Naive thymus-derived CD4-positive, alpha-beta T cell (primary cell): ENCODE measurements at regions of chr13 and their contacts with region 1.

Region 1: DNA sequence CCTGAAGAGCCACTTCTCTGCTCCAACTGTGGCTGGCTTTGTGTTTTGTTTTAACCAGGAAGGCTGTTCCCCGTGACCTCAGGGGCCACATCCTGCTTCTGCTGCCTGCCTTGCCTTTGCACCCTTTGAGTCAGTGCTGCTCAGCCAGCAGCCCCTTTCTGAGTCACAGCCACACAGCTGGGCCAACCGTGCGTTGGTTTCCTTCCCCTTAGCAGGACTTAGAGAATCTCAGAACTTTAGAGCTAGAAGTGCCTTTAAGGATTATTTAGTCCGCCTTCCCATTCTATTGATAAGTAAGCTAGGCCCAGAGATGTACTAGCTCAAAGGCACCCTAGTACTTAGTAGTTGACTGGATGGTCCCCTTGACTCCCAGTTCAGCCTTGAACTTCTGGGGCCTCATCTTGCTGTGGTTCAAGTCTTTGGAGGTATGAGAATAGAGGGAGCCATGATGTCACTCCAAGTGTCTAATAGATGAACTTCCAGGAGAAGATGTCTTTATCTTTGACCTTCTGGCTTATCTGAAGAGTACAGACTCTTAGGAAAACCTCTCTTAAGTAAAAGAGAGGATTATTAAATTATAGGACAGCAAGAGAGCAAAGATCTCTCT is 8.0 kb downstream of the RGCC start:
- DNase-seq: peak; percentile 63 to 90 (median 89)
- ATAC-seq: peak; percentile 72
- H3K4me3 ChIP-seq: peak overlapping the region; percentile 51
- H3K4me3 Mint-ChIP-seq: peak overlapping the region; percentile 89 to 98 (median 94)
- H3K27ac ChIP-seq: peak overlapping the region; percentile 97
- H3K27ac Mint-ChIP-seq: peak overlapping the region; percentile 96 to 100 (median 99)
- H3K4me1 ChIP-seq: peaks cover 64 to 87% of the 10 kb centered on the region in 2 donors
- H3K4me1 Mint-ChIP-seq: peaks cover 64 to 98% (median 93%) of the 10 kb centered on the region in 7 donors
- H3K27me3 ChIP-seq: no peaks in the 10 kb centered on the region
- H3K27me3 Mint-ChIP-seq: no peaks in the 10 kb centered on the region

Region 2: GRCh38 chr13:40181203-40181845 is 1284.0 kb before region 1 on chr13:
- CTCF ChIA-PET with region 1: no interaction called
- POLR2A ChIA-PET with region 1: no interaction called
- intact Hi-C with region 1: loop called in 1 of 2 experiments (anchors 10 kb)
- DNase-seq: no peak
- ATAC-seq: no peak
- H3K4me3 ChIP-seq: no peak overlapping the region
- H3K4me3 Mint-ChIP-seq: no peak overlapping the region
- H3K27ac ChIP-seq: no peak overlapping the region
- H3K27ac Mint-ChIP-seq: peak overlapping the region in 1 of 9 donors; percentile 37
- H3K4me1 ChIP-seq: peaks cover 8 to 42% of the 10 kb centered on the region in 2 donors
- H3K4me1 Mint-ChIP-seq: peaks cover 33 to 83% (median 67%) of the 10 kb centered on the region in 7 donors
- H3K27me3 ChIP-seq: no peaks in the 10 kb centered on the region
- H3K27me3 Mint-ChIP-seq: no peaks in the 10 kb centered on the region

Region 3: GRCh38 chr13:41543664-41544300 is 78.4 kb after region 1 on chr13:
- CTCF ChIA-PET with region 1: no interaction called
- POLR2A ChIA-PET with region 1: interaction called, 10 read pairs
- intact Hi-C with region 1: loop called (anchors 1 to 5 kb)
- DNase-seq: no peak
- ATAC-seq: no peak
- H3K4me3 ChIP-seq: no peak overlapping the region
- H3K4me3 Mint-ChIP-seq: no peak overlapping the region
- H3K27ac ChIP-seq: no peak overlapping the region
- H3K27ac Mint-ChIP-seq: peak overlapping the region in 4 of 9 donors; percentile 8 to 83 (median 34)
- H3K4me1 ChIP-seq: peaks cover 0 to 9% of the 10 kb centered on the region in 2 donors
- H3K4me1 Mint-ChIP-seq: peaks cover 9 to 33% (median 22%) of the 10 kb centered on the region in 7 donors
- H3K27me3 ChIP-seq: no peaks in the 10 kb centered on the region
- H3K27me3 Mint-ChIP-seq: no peaks in the 10 kb centered on the region

Region 4: DNA sequence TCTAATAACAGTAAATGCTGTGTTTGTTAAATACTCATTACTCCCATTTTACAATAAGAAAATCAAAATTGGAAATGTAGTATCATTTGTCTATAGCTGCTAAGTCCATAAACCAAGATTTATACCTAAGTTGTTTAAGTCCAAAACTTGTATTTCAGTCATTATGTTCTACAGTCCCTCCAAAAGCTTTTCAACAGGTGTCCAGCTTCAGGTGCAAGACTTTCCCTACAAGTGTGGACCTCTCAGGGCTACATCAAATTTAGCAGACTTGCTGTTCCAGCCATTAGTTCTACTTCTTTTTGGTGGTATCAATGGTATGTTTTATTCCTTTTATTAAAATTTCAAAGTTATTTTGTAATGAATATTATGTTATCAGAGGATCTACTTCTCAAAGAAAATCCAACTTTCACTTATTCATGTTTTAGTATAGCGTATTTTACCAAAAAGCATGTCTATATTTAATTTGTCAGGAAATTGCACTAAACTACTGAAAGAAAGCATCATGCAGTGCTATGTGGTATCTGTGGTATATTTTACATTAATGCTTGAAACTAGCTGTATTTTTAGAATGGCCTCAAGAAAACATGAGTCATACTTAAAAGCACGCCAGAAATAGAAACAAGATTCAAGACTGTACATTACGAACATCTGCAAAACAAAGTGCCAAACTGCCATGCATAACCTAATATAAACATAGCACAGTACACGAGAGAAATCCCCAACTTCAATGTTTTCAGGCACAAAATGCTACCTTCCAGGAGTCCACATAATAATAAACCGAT is 451.0 kb after region 1 on chr13:
- CTCF ChIA-PET with region 1: no interaction called
- POLR2A ChIA-PET with region 1: no interaction called
- intact Hi-C with region 1: loop called in 1 of 2 experiments (anchors 2 kb)
- DNase-seq: peak in 5 of 9 donors; percentile 15 to 47 (median 30)
- ATAC-seq: peak; percentile 76
- H3K4me3 ChIP-seq: no peak overlapping the region
- H3K4me3 Mint-ChIP-seq: peak overlapping the region in 9 of 10 donors; percentile 26 to 81 (median 57)
- H3K27ac ChIP-seq: no peak overlapping the region
- H3K27ac Mint-ChIP-seq: peak overlapping the region in 7 of 9 donors; percentile 0 to 87 (median 47)
- H3K4me1 ChIP-seq: peaks cover 11 to 15% of the 10 kb centered on the region in 2 donors
- H3K4me1 Mint-ChIP-seq: peaks cover 26 to 65% (median 44%) of the 10 kb centered on the region in 7 donors
- H3K27me3 ChIP-seq: no peaks in the 10 kb centered on the region
- H3K27me3 Mint-ChIP-seq: no peaks in the 10 kb centered on the region

Region 5: GRCh38 chr13:42048682-42049453 is 583.5 kb after region 1 on chr13:
- CTCF ChIA-PET with region 1: no interaction called
- POLR2A ChIA-PET with region 1: no interaction called
- intact Hi-C with region 1: loop called in 1 of 2 experiments (anchors 5 kb)
- DNase-seq: peak; percentile 20 to 81 (median 43)
- ATAC-seq: peak; percentile 81
- H3K4me3 ChIP-seq: peak overlapping the region; percentile 84
- H3K4me3 Mint-ChIP-seq: peak overlapping the region; percentile 83 to 96 (median 92)
- H3K27ac ChIP-seq: peak overlapping the region; percentile 67
- H3K27ac Mint-ChIP-seq: peak overlapping the region in 2 of 9 donors; percentile 74 to 78
- H3K4me1 ChIP-seq: peaks cover 5 to 9% of the 10 kb centered on the region in 2 donors
- H3K4me1 Mint-ChIP-seq: peaks cover 6 to 38% (median 15%) of the 10 kb centered on the region in 7 donors
- H3K27me3 ChIP-seq: no peaks in the 10 kb centered on the region
- H3K27me3 Mint-ChIP-seq: peaks cover 0 to 15% (median 0%) of the 10 kb centered on the region in 5 donors